ENCODE measurements at regions of chr7 and their contacts with region 1.

Region 1: GRCh38 chr7:148698397-148699023 is at the start of gene CUL1:
- DNase-seq: peak; percentile 61 to 93 (median 83)
- ATAC-seq: peak; percentile 79
- H3K4me3 ChIP-seq: peak within 1 kb of the TSS; percentile 66 to 75
- H3K4me3 Mint-ChIP-seq: peak within 1 kb of the TSS; percentile 88
- H3K27ac ChIP-seq: peak within 1 kb of the TSS; percentile 68 to 74
- H3K27ac Mint-ChIP-seq: peak within 1 kb of the TSS; percentile 92
- H3K4me1 ChIP-seq: peaks cover 37% of the 10 kb centered on the region
- H3K4me1 Mint-ChIP-seq: peaks cover 49% of the 10 kb centered on the region
- H3K27me3 ChIP-seq: no peaks in the 10 kb centered on the region
- H3K27me3 Mint-ChIP-seq: no peaks in the 10 kb centered on the region
- CTCF ChIP-seq: no peak
- total RNA-seq, gene CUL1: 23.9 to 25.6 TPM

Region 2: GRCh38 chr7:148527707-148528168 is 170.8 kb before region 1 on chr7:
- CTCF ChIA-PET with region 1: no interaction called
- POLR2A ChIA-PET with region 1: no interaction called
- intact Hi-C with region 1: loop called in 1 of 2 experiments (anchors 5 kb)
- DNase-seq: peak; percentile 67 to 91 (median 80)
- ATAC-seq: peak; percentile 100
- H3K4me3 ChIP-seq: no peak overlapping the region
- H3K4me3 Mint-ChIP-seq: no peak overlapping the region
- H3K27ac ChIP-seq: no peak overlapping the region
- H3K27ac Mint-ChIP-seq: no peak overlapping the region
- H3K4me1 ChIP-seq: no peaks in the 10 kb centered on the region
- H3K4me1 Mint-ChIP-seq: no peaks in the 10 kb centered on the region
- H3K27me3 ChIP-seq: no peaks in the 10 kb centered on the region
- H3K27me3 Mint-ChIP-seq: peaks cover 40% of the 10 kb centered on the region
- CTCF ChIP-seq: peak; percentile 71

Region 3: DNA sequence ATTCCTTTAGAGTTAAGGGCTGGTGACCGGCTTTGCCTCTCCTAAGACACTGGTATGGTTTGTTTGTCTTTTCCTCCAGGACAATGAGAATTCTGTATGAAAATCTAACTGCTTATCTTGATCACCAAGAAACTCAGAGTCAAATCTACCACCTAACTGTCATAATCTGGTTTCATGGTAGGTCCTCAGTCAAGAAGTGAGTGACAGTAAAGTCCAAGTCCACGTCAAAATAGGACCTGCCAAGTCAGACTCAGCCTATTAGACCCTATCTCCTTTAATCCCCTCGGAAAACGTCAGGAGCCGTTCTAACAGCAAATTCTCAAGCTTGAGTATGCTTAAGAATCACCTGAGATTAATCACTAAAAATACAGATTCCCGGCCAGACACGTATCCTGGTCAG is 70.5 kb before region 1 on chr7:
- CTCF ChIA-PET with region 1: no interaction called
- POLR2A ChIA-PET with region 1: interaction called, 13 read pairs
- intact Hi-C with region 1: loop called (anchors 2 kb)
- DNase-seq: no peak
- ATAC-seq: no peak
- H3K4me3 ChIP-seq: no peak overlapping the region
- H3K4me3 Mint-ChIP-seq: peak overlapping the region; percentile 62
- H3K27ac ChIP-seq: no peak overlapping the region
- H3K27ac Mint-ChIP-seq: no peak overlapping the region
- H3K4me1 ChIP-seq: peaks cover 34% of the 10 kb centered on the region
- H3K4me1 Mint-ChIP-seq: peaks cover 45% of the 10 kb centered on the region
- H3K27me3 ChIP-seq: peaks cover 0 to 19% of the 10 kb centered on the region in 2 experiments
- H3K27me3 Mint-ChIP-seq: peaks cover 15% of the 10 kb centered on the region
- CTCF ChIP-seq: no peak

Region 4: GRCh38 chr7:148747275-148747674 is 48.8 kb after region 1 on chr7:
- CTCF ChIA-PET with region 1: no interaction called
- POLR2A ChIA-PET with region 1: no interaction called
- intact Hi-C with region 1: loop called in 1 of 2 experiments (anchors 5 kb)
- DNase-seq: peak in 2 of 9 experiments; percentile 36 to 54
- ATAC-seq: peak; percentile 34
- H3K4me3 ChIP-seq: no peak overlapping the region
- H3K4me3 Mint-ChIP-seq: no peak overlapping the region
- H3K27ac ChIP-seq: no peak overlapping the region
- H3K27ac Mint-ChIP-seq: no peak overlapping the region
- H3K4me1 ChIP-seq: no peaks in the 10 kb centered on the region
- H3K4me1 Mint-ChIP-seq: peaks cover 30% of the 10 kb centered on the region
- H3K27me3 ChIP-seq: no peaks in the 10 kb centered on the region
- H3K27me3 Mint-ChIP-seq: no peaks in the 10 kb centered on the region
- CTCF ChIP-seq: no peak

Region 5: GRCh38 chr7:148884299-148885022 is 186.0 kb after region 1 on chr7:
- CTCF ChIA-PET with region 1: no interaction called
- POLR2A ChIA-PET with region 1: interaction called, 3 read pairs
- intact Hi-C with region 1: loop called (anchors 1 to 5 kb)
- DNase-seq: peak; percentile 87 to 97 (median 93)
- ATAC-seq: peak; percentile 89
- H3K4me3 ChIP-seq: peak overlapping the region; percentile 54 to 61
- H3K4me3 Mint-ChIP-seq: peak overlapping the region; percentile 87
- H3K27ac ChIP-seq: peak overlapping the region; percentile 47 to 67
- H3K27ac Mint-ChIP-seq: peak overlapping the region; percentile 89
- H3K4me1 ChIP-seq: peaks cover 8% of the 10 kb centered on the region
- H3K4me1 Mint-ChIP-seq: peaks cover 24% of the 10 kb centered on the region
- H3K27me3 ChIP-seq: peaks cover 0 to 4% of the 10 kb centered on the region in 2 experiments
- H3K27me3 Mint-ChIP-seq: no peaks in the 10 kb centered on the region
- CTCF ChIP-seq: no peak

Region 6: GRCh38 chr7:148962823-148963582 is 264.5 kb after region 1 on chr7:
- CTCF ChIA-PET with region 1: interaction called, 4 read pairs
- POLR2A ChIA-PET with region 1: no interaction called
- intact Hi-C with region 1: loop called (anchors 2 to 5 kb)
- DNase-seq: peak; percentile 33 to 84 (median 63)
- ATAC-seq: peak; percentile 51
- H3K4me3 ChIP-seq: peak overlapping the region; percentile 65 to 74
- H3K4me3 Mint-ChIP-seq: peak overlapping the region; percentile 92
- H3K27ac ChIP-seq: peak overlapping the region; percentile 69 to 80
- H3K27ac Mint-ChIP-seq: peak overlapping the region; percentile 90
- H3K4me1 ChIP-seq: peaks cover 12% of the 10 kb centered on the region
- H3K4me1 Mint-ChIP-seq: peaks cover 24% of the 10 kb centered on the region
- H3K27me3 ChIP-seq: no peaks in the 10 kb centered on the region
- H3K27me3 Mint-ChIP-seq: no peaks in the 10 kb centered on the region
- CTCF ChIP-seq: peak; percentile 77

Region 7: DNA sequence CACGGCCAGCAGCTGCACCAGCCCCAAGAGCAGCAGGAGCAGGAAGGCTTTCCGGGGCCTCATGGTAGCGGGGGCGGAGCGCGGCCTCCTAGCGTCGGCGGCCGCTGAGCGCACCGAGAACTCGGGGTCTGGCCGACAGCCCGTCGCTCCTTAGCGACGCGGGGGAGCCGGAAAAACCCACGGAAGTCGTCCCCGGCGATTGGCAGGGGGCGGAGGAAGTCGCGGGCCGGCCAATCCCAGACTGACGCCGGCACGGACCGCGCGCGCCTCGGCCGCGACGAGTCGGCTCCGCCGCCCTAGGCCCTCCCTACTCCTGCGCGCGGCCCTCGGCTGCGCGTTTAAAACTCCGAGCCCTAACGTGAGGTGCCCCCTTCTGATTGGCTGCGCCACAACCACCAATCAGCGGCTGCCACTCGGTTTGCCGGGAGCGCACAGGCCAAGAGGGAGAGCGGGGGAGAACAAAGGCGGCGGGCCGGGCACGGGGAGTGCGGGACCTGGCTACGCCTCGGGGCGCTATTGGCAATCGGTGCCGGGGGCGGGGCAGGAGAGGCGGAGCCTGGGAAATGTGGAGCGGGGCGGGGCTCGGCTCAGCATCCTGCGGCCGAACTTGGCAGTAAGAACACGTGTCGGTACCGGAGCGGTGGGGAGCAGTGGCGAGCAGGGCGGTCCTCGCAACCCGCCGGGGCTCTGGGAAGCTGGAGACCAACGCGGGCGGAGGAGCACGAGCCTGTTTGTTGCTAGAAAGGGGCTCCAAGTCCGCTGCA is 330.0 kb after region 1 on chr7 and contains the start of gene PDIA4:
- CTCF ChIA-PET with region 1: no interaction called
- POLR2A ChIA-PET with region 1: no interaction called
- intact Hi-C with region 1: loop called in 1 of 2 experiments (anchors 1 kb)
- DNase-seq: peak; percentile 98 to 100 (median 99)
- ATAC-seq: peak; percentile 88
- H3K4me3 ChIP-seq: peak within 1 kb of the TSS; percentile 58 to 78
- H3K4me3 Mint-ChIP-seq: peak within 1 kb of the TSS; percentile 87
- H3K27ac ChIP-seq: peak within 1 kb of the TSS; percentile 62 to 78
- H3K27ac Mint-ChIP-seq: peak within 1 kb of the TSS; percentile 94
- H3K4me1 ChIP-seq: peaks cover 27% of the 10 kb centered on the region
- H3K4me1 Mint-ChIP-seq: peaks cover 49% of the 10 kb centered on the region
- H3K27me3 ChIP-seq: no peaks in the 10 kb centered on the region
- H3K27me3 Mint-ChIP-seq: no peaks in the 10 kb centered on the region
- CTCF ChIP-seq: no peak
- total RNA-seq, gene PDIA4: 12.0 to 14.5 TPM

Measured in CD8-positive, alpha-beta T cell (primary cell).